ENCODE measurements at regions of chr10 and their contacts with region 1.

Region 1: DNA sequence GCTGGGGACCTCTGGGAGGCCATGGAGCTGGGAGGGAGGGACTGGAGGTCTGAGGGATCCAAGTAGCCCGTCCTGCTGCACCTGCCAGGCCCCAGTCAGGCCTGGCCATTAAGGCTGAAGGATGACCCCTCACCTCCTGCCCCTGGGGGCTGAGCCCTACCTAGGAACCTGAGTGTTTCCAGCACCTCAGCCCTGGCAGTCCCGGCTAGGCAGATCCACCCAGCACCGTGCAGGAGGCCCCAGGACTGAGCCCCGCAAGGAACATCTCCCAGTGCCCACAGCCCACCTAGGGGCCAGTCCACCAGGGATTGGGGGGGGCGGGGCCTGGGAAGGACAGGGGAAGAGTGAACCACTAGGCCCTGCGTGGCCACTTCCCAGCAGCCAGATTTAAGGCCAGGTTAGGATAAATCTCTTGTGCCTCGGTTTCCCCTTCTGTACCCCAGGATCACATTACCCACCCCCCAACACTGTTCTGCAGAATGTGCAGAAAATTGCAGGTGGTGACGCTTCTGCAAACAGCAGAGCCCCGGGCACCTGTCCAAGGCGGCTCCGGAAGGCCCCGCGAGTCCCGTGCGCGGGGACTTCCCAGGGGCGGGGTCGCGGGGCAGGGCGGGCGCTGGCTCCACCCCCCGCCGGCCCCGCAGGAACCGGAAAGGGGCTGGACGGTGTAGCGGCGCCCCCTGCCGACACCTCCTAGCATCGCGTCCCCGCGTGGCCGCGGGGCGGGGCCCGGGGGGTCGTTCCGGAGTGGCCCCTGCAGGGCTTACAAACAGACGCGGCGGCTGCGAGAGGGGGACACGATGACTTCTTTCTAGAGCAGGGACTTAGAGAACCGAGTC is 55.9 kb downstream of the PWWP2B start:
- DNase-seq: peak; percentile 65 to 82
- H3K4me3 ChIP-seq: peak overlapping the region in 2 of 3 donors; percentile 34 to 38
- H3K27ac ChIP-seq: peak overlapping the region in 1 of 2 donors; percentile 15
- H3K4me1 ChIP-seq: peaks cover 0 to 10% of the 10 kb centered on the region in 2 donors
- H3K27me3 ChIP-seq: peaks cover 0 to 6% of the 10 kb centered on the region in 2 donors
- CTCF ChIP-seq: peak; percentile 86 to 99 (median 93)
- POLR2A ChIP-seq: no peak

Region 2: GRCh38 chr10:132223156-132223590 is 229.7 kb before region 1 on chr10:
- intact Hi-C with region 1: loop called (anchors 10 kb)
- DNase-seq: peak; percentile 67 to 77
- H3K4me3 ChIP-seq: no peak overlapping the region
- H3K27ac ChIP-seq: no peak overlapping the region
- H3K4me1 ChIP-seq: no peaks in the 10 kb centered on the region
- H3K27me3 ChIP-seq: no peaks in the 10 kb centered on the region
- CTCF ChIP-seq: peak in 2 of 3 donors; percentile 79 to 88
- POLR2A ChIP-seq: no peak